ENCODE measurements at regions of chr1 and their contacts with region 1.

Region 1: GRCh38 chr1:94801919-94802546 is 18.1 kb upstream of the SLC44A3 start:
- DNase-seq: no peak
- H3K4me3 Mint-ChIP-seq: no peak overlapping the region
- H3K27ac Mint-ChIP-seq: no peak overlapping the region
- H3K4me1 Mint-ChIP-seq: peaks cover 7% of the 10 kb centered on the region
- H3K27me3 Mint-ChIP-seq: peaks cover 1% of the 10 kb centered on the region

Region 2: DNA sequence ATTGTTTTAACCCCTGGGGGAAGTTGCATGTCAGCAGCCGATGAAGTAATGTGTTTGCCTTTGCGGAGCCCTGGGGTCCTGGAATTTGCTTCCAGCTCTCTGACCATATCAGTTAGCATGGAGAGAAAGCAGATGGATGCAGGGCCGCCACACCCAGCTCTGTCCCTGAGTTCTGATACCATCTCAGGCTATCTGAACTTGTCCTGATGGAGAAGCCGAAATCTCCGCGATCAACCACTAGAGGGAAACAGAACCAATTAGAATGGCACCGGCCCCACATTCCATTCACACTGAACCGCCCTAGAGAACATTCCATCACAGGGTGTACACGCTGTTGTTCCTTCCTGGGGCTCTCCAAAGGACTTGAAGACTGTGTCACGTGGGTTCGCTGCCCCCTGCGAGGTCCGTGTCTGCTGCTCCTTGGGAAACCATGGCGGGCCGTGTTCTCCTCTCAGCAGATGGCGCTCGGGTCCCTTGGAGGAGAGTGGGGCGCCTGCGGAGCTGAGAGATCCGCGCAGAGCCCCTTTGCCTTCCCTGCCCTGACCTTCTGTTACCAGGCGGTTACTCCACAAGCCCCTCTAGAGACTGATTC is 756.5 kb before region 1 on chr1:
- CTCF ChIA-PET with region 1: interaction called, 10 read pairs
- POLR2A ChIA-PET with region 1: no interaction called
- intact Hi-C with region 1: loop called (anchors 5 kb)
- DNase-seq: peak; percentile 50
- H3K4me3 Mint-ChIP-seq: peak overlapping the region; percentile 41
- H3K27ac Mint-ChIP-seq: no peak overlapping the region
- H3K4me1 Mint-ChIP-seq: peaks cover 6% of the 10 kb centered on the region
- H3K27me3 Mint-ChIP-seq: peaks cover 13% of the 10 kb centered on the region

Region 3: DNA sequence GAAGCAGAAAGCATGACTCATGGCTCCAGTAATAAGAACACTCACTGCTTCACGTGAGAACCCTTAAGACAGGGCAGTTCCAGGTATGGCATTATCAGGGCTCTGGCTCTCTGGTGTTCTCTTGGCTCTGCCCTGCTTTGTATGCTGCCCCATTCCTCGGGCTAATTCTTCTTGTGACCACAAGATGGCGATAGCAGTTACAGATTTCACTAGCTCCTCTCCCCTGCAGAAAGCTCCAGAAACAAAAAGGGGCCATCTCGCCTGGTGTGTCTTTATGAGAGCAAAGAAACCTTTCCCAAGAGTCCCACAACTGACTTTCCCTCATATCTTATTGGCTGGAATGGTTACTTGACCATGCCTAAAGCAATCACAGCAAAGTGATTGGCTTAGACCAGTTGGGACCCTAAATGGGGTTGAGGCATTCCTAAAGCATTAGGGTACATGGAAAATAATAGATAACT is 320.5 kb before region 1 on chr1:
- CTCF ChIA-PET with region 1: interaction called, 94 read pairs
- POLR2A ChIA-PET with region 1: no interaction called
- intact Hi-C with region 1: loop called (anchors 1 kb)
- DNase-seq: peak; percentile 37
- H3K4me3 Mint-ChIP-seq: no peak overlapping the region
- H3K27ac Mint-ChIP-seq: no peak overlapping the region
- H3K4me1 Mint-ChIP-seq: no peaks in the 10 kb centered on the region
- H3K27me3 Mint-ChIP-seq: no peaks in the 10 kb centered on the region

Region 4: GRCh38 chr1:94514095-94514727 is 287.8 kb before region 1 on chr1:
- CTCF ChIA-PET with region 1: interaction called, 28 read pairs
- POLR2A ChIA-PET with region 1: no interaction called
- intact Hi-C with region 1: loop called (anchors 2 kb)
- DNase-seq: peak; percentile 11
- H3K4me3 Mint-ChIP-seq: no peak overlapping the region
- H3K27ac Mint-ChIP-seq: no peak overlapping the region
- H3K4me1 Mint-ChIP-seq: no peaks in the 10 kb centered on the region
- H3K27me3 Mint-ChIP-seq: no peaks in the 10 kb centered on the region

Region 5: DNA sequence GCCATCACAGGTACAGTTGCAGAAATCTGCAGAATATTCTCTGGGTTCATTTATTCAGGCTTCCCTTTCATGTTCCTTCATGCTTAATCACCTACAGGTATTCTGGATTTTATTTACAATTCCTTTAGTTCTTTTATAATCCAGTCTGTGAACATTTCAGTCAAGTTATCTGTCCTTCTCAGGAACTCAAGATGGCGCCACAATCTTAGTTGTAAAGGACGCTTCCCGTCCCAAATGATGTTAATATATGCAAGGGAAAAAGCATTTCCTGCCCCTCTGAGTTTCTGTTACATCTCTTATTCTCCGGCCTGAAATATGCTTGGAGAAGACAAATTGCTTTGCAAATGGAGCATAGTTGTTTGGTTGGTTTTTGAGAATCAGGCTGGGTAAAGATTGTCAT is 279.7 kb before region 1 on chr1:
- CTCF ChIA-PET with region 1: interaction called, 4 read pairs
- POLR2A ChIA-PET with region 1: no interaction called
- intact Hi-C with region 1: loop called (anchors 2 kb)
- DNase-seq: no peak
- H3K4me3 Mint-ChIP-seq: no peak overlapping the region
- H3K27ac Mint-ChIP-seq: no peak overlapping the region
- H3K4me1 Mint-ChIP-seq: no peaks in the 10 kb centered on the region
- H3K27me3 Mint-ChIP-seq: no peaks in the 10 kb centered on the region